CD4-positive, alpha-beta memory T cell (primary cell): ENCODE measurements at regions of chr6 and their contacts with region 1.

Region 1: DNA sequence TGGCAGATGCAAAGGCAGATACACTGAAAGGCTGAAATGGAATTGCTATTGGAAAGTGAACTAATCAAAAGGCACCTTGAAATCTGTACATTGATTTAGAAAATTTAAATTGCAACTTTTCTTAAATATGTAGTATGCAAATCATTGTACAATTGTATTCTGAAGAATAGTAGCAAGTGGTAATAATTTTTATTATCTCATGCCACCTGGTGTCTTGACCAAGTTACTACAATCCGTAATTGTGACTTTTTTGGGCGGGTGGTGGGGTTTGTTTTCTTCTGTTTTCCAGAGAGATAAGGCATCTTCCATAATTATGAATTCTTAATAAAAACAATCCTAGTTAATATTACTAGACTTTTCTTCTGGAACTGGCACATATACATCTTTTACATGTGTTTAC is 12.5 kb upstream of the BCKDHB start:
- DNase-seq: peak in 4 of 5 donors; percentile 33 to 46 (median 38)
- H3K4me3 ChIP-seq: no peak overlapping the region
- H3K4me3 Mint-ChIP-seq: no peak overlapping the region
- H3K27ac ChIP-seq: no peak overlapping the region
- H3K27ac Mint-ChIP-seq: no peak overlapping the region
- H3K4me1 ChIP-seq: no peaks in the 10 kb centered on the region
- H3K4me1 Mint-ChIP-seq: peaks cover 0 to 5% (median 0%) of the 10 kb centered on the region in 4 donors
- H3K27me3 ChIP-seq: no peaks in the 10 kb centered on the region
- H3K27me3 Mint-ChIP-seq: peaks cover under 1 to 7% of the 10 kb centered on the region in 2 donors

Region 2: DNA sequence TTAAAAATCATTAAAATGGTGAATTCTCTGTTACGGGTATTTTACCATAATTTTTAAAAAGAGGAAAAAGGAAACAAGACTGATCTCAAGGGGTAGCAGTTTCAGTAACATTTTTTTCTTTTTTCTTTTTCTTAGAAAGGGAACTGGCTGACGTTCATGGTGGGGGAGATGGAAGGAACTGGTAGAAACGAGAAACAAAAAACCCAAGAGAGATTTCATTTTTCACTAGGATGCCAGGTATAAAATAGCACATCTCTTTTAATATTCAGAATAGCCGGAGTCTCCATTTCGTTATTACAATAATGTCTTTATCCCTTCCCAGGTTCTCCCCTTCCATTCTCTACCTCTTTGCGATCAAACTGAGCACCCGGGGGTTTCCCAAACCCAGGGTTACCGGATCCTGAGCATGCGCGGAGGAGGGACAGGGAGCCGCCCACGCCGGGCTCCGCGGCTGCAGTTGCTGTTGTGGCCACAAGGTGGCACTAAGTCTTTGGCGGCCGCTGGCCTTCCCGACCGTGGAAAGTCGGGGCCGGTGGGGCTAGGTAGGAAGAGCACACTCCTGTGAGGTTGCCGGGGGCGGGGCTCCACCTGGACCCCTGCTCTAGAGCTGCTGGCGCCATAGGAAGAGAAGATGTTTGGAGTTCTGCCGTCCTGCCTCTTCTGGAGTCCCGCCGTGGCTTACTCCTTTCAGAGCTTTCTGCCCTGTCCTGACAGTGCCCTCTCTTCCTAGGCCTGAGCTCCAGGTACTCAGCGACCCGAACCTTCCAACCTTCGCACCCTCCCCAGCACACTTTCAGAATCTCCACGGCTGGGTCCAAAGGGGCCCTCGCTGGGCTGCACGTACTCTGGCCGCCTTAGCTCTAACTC is 316.1 kb before region 1 on chr6:
- CTCF ChIA-PET with region 1: interaction called, 18 read pairs
- POLR2A ChIA-PET with region 1: no interaction called
- intact Hi-C with region 1: loop called (anchors 1 kb)
- DNase-seq: peak; percentile 79 to 82 (median 81)
- H3K4me3 ChIP-seq: peak overlapping the region; percentile 11 to 67
- H3K4me3 Mint-ChIP-seq: peak overlapping the region; percentile 79 to 87 (median 80)
- H3K27ac ChIP-seq: no peak overlapping the region
- H3K27ac Mint-ChIP-seq: peak overlapping the region in 6 of 7 donors; percentile 23 to 65 (median 58)
- H3K4me1 ChIP-seq: peaks cover 7% of the 10 kb centered on the region
- H3K4me1 Mint-ChIP-seq: peaks cover 4 to 11% (median 8%) of the 10 kb centered on the region in 4 donors
- H3K27me3 ChIP-seq: no peaks in the 10 kb centered on the region
- H3K27me3 Mint-ChIP-seq: no peaks in the 10 kb centered on the region